IMR-90 (cell line): ENCODE measurements at regions of chr4 and their contacts with region 1.

Region 1: GRCh38 chr4:79198951-79199587 is 126.8 kb downstream of the NAA11 start:
- DNase-seq: no peak
- ATAC-seq: no peak
- H3K4me3 ChIP-seq: no peak overlapping the region
- H3K27ac ChIP-seq: no peak overlapping the region
- H3K4me1 ChIP-seq: no peaks in the 10 kb centered on the region
- H3K27me3 ChIP-seq: no peaks in the 10 kb centered on the region
- CTCF ChIP-seq: no peak
- POLR2A ChIP-seq: no peak
- RAD21 ChIP-seq: no peak

Region 2: GRCh38 chr4:79209822-79210635 is 11.0 kb after region 1 on chr4:
- CTCF ChIA-PET with region 1: interaction called, 3 read pairs
- POLR2A ChIA-PET with region 1: no interaction called
- dilution Hi-C with region 1: no loop called
- in situ Hi-C with region 1: no loop called
- intact Hi-C with region 1: loop called (anchors 1 kb)
- DNase-seq: no peak
- ATAC-seq: no peak
- H3K4me3 ChIP-seq: no peak overlapping the region
- H3K27ac ChIP-seq: no peak overlapping the region
- H3K4me1 ChIP-seq: no peaks in the 10 kb centered on the region
- H3K27me3 ChIP-seq: no peaks in the 10 kb centered on the region
- CTCF ChIP-seq: no peak
- POLR2A ChIP-seq: no peak
- RAD21 ChIP-seq: no peak